ENCODE measurements at regions of chr2 and their contacts with region 1.

Region 1: DNA sequence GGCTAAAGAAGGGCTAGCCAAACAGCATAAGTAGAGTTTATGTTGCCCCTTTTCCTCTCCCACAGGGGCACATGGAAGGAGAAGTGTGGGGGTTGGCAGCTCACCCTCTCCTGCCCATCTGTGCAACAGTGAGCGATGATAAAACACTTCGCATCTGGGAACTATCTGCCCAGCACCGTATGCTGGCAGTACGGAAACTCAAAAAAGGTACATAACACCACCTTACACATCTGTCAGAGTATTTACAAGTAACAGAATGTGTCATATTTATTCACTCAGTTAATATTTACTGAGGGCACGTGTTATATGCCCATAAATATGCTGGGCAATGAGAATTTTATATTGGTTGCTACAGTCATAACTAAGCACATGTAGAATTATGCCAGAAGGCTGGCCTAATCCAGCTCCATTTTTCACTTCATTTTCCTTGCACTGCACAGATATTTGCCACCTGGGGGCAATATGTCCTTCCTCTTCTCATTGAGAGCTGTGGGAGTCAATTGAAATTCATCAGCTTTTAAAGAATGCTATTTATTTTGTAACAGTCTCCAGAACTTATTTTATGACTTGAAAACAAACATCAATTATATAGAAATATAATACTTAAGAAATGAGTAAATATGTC is 150.6 kb downstream of the RTN4 start:
- DNase-seq: peak; percentile 72
- H3K4me3 Mint-ChIP-seq: no peak overlapping the region
- H3K27ac Mint-ChIP-seq: no peak overlapping the region
- H3K4me1 Mint-ChIP-seq: peaks cover 13% of the 10 kb centered on the region
- H3K27me3 Mint-ChIP-seq: no peaks in the 10 kb centered on the region
- CTCF ChIP-seq: peak; percentile 65

Region 2: GRCh38 chr2:54735636-54736035 is 164.1 kb before region 1 on chr2:
- CTCF ChIA-PET with region 1: no interaction called
- POLR2A ChIA-PET with region 1: no interaction called
- intact Hi-C with region 1: no loop called
- DNase-seq: no peak
- H3K4me3 Mint-ChIP-seq: no peak overlapping the region
- H3K27ac Mint-ChIP-seq: no peak overlapping the region
- H3K4me1 Mint-ChIP-seq: no peaks in the 10 kb centered on the region
- H3K27me3 Mint-ChIP-seq: no peaks in the 10 kb centered on the region
- CTCF ChIP-seq: no peak

Region 3: DNA sequence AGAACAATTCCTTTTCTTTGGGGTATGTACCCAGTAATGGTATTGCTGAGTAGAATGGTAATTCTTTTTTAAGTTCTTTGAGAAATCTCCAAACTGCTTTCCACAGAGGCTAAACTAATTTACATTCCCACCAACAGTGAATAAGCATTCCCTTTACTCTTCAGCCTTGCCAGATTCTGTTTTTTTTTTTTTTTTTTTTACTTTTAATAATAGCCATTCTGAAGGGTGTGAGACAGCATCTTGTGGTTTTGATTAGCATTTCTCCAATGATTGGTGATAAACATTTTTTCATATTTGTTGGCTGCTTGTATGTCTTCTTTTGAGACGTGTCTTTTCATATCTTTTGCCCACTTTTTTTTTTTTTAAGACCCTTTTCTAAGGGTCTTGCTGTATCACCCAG is 13.2 kb after region 1 on chr2:
- CTCF ChIA-PET with region 1: interaction called, 14 read pairs
- POLR2A ChIA-PET with region 1: interaction called, 3 read pairs
- intact Hi-C with region 1: no loop called
- DNase-seq: no peak
- H3K4me3 Mint-ChIP-seq: no peak overlapping the region
- H3K27ac Mint-ChIP-seq: no peak overlapping the region
- H3K4me1 Mint-ChIP-seq: no peaks in the 10 kb centered on the region
- H3K27me3 Mint-ChIP-seq: no peaks in the 10 kb centered on the region
- CTCF ChIP-seq: no peak

Region 4: DNA sequence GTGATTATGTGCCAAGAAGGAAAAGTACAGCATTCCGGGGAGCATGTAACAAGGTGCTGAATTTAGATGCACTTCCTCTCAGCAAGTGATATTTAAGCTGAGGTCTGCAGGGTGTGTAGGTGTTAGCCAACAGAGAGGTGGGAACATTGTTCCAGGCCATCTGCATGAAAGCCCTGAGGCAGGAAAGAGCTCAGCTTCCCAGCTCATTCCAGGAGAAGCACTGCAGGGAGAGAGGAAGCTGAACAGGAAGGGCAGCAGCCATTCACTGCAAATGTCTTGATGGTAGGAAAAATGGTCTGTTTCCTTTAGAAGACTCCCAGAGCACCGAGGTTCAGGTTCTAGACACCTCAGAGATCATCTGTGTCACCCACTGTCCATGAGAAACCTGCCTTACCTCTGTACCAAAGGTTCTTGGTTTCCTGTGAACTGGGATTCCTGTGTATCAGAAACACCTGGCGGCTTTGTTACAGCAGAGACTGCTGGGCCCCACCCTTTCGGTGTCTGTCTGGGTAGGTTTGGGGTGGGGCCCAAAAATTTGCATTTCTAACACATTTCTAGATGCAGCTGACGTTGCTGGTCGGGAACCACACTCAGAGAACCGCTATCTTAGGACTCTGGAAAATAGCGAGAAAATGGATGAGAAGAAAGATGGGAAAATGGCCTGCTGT is 66.6 kb after region 1 on chr2:
- CTCF ChIA-PET with region 1: interaction called, 20 read pairs
- POLR2A ChIA-PET with region 1: interaction called, 8 read pairs
- intact Hi-C with region 1: loop called (anchors 2 kb)
- DNase-seq: peak; percentile 76
- H3K4me3 Mint-ChIP-seq: peak overlapping the region; percentile 12
- H3K27ac Mint-ChIP-seq: peak overlapping the region; percentile 68
- H3K4me1 Mint-ChIP-seq: peaks cover 45% of the 10 kb centered on the region
- H3K27me3 Mint-ChIP-seq: no peaks in the 10 kb centered on the region
- CTCF ChIP-seq: no peak

Region 5: GRCh38 chr2:55010149-55010591 is 110.5 kb after region 1 on chr2:
- CTCF ChIA-PET with region 1: interaction called, 160 read pairs
- POLR2A ChIA-PET with region 1: interaction called, 136 read pairs
- intact Hi-C with region 1: loop called (anchors 1 kb)
- DNase-seq: peak; percentile 63
- H3K4me3 Mint-ChIP-seq: peak overlapping the region; percentile 77
- H3K27ac Mint-ChIP-seq: peak overlapping the region; percentile 76
- H3K4me1 Mint-ChIP-seq: peaks cover 56% of the 10 kb centered on the region
- H3K27me3 Mint-ChIP-seq: no peaks in the 10 kb centered on the region
- CTCF ChIP-seq: no peak

Region 6: GRCh38 chr2:55026202-55026601 is 126.5 kb after region 1 on chr2:
- CTCF ChIA-PET with region 1: interaction called, 160 read pairs
- POLR2A ChIA-PET with region 1: no interaction called
- intact Hi-C with region 1: no loop called
- DNase-seq: peak; percentile 57
- H3K4me3 Mint-ChIP-seq: no peak overlapping the region
- H3K27ac Mint-ChIP-seq: no peak overlapping the region
- H3K4me1 Mint-ChIP-seq: peaks cover 7% of the 10 kb centered on the region
- H3K27me3 Mint-ChIP-seq: no peaks in the 10 kb centered on the region
- CTCF ChIP-seq: no peak

Region 7: GRCh38 chr2:55175254-55176025 is 275.8 kb after region 1 on chr2:
- CTCF ChIA-PET with region 1: interaction called, 98 read pairs
- POLR2A ChIA-PET with region 1: interaction called, 5 read pairs
- intact Hi-C with region 1: loop called (anchors 1 kb)
- DNase-seq: peak; percentile 51
- H3K4me3 Mint-ChIP-seq: no peak overlapping the region
- H3K27ac Mint-ChIP-seq: peak overlapping the region; percentile 1
- H3K4me1 Mint-ChIP-seq: peaks cover 10% of the 10 kb centered on the region
- H3K27me3 Mint-ChIP-seq: no peaks in the 10 kb centered on the region
- CTCF ChIP-seq: peak; percentile 70

Region 8: GRCh38 chr2:55431982-55432627 is 532.4 kb after region 1 on chr2:
- CTCF ChIA-PET with region 1: interaction called, 3 read pairs
- POLR2A ChIA-PET with region 1: no interaction called
- intact Hi-C with region 1: loop called (anchors 5 kb)
- DNase-seq: peak; percentile 51
- H3K4me3 Mint-ChIP-seq: no peak overlapping the region
- H3K27ac Mint-ChIP-seq: no peak overlapping the region
- H3K4me1 Mint-ChIP-seq: no peaks in the 10 kb centered on the region
- H3K27me3 Mint-ChIP-seq: no peaks in the 10 kb centered on the region
- CTCF ChIP-seq: peak; percentile 52